ENCODE measurements at regions of chr7 and their contacts with region 1.

Region 1: DNA sequence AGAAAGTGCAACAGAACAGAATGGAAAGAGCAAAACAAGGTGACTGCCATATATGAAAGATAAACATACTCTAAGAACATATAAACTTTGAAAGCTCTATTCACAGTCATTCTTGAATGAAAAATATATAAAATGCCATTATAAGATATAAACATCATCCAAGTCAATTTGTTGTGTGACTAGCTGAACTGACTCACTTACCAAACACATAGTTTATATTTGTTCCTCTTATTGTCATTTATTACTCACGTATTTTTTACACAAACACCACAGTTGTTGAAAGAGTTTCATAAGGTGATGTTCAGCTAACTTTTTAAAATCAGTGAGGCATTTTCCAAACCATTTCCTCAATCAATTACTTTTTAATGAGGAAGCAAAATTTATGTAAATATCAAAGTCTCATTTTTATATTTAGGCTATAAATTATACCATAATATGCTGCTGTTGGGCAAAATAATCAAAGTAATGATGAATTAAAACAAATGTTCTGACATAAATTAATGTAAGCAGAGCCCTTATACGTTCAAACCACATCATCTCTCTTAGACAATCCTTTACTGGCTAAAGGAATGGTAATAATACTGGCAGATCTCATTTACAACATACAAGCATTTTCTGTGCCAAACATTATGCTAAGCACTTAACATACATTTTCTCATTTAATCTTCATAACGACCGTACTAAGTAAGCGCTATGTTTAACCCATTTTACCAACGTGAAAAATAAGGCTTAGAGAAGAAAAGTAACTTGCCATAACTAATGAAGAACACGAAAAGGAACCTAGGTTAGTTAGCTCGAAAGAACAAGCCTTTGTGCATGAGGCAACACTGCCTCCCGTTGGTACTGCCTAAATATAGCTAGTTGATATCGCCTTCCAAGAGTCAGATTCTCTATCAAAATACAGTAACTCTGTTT is 7.3 kb downstream of the LRRN3 start:
- DNase-seq: peak; percentile 47
- H3K4me3 Mint-ChIP-seq: peak overlapping the region; percentile 78
- H3K27ac Mint-ChIP-seq: peak overlapping the region; percentile 62
- H3K4me1 Mint-ChIP-seq: peaks cover 81% of the 10 kb centered on the region
- H3K27me3 Mint-ChIP-seq: no peaks in the 10 kb centered on the region

Region 2: GRCh38 chr7:110010359-110010758 is 1087.9 kb before region 1 on chr7:
- intact Hi-C with region 1: loop called (anchors 2 kb)
- DNase-seq: no peak
- H3K4me3 Mint-ChIP-seq: no peak overlapping the region
- H3K27ac Mint-ChIP-seq: no peak overlapping the region
- H3K4me1 Mint-ChIP-seq: no peaks in the 10 kb centered on the region
- H3K27me3 Mint-ChIP-seq: no peaks in the 10 kb centered on the region

Region 3: DNA sequence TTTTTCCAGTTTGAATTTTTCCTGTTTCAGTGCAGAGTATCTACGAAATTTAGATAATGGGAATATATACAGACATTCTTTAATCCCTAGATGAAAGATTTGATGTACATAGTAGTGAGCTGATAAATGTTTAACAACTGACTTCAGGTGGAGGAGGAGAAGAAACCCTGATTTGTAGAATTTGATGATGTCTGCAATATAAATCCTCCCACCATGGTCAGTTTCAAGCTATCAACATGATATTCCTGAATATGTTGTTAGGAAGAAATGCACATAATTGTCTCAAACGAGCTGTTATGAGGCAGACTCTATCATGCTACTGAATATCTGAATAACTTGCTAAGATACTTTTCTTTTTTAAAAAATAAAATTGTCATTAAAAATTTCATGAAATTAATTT is 636.6 kb before region 1 on chr7:
- intact Hi-C with region 1: loop called (anchors 10 kb)
- DNase-seq: no peak
- H3K4me3 Mint-ChIP-seq: no peak overlapping the region
- H3K27ac Mint-ChIP-seq: no peak overlapping the region
- H3K4me1 Mint-ChIP-seq: no peaks in the 10 kb centered on the region
- H3K27me3 Mint-ChIP-seq: peaks cover 4% of the 10 kb centered on the region

Region 4: GRCh38 chr7:110522761-110523244 is 575.5 kb before region 1 on chr7:
- intact Hi-C with region 1: loop called (anchors 10 kb)
- DNase-seq: no peak
- H3K4me3 Mint-ChIP-seq: no peak overlapping the region
- H3K27ac Mint-ChIP-seq: no peak overlapping the region
- H3K4me1 Mint-ChIP-seq: no peaks in the 10 kb centered on the region
- H3K27me3 Mint-ChIP-seq: no peaks in the 10 kb centered on the region

Region 5: GRCh38 chr7:110590415-110590814 is 507.9 kb before region 1 on chr7:
- intact Hi-C with region 1: loop called (anchors 2 kb)
- DNase-seq: no peak
- H3K4me3 Mint-ChIP-seq: no peak overlapping the region
- H3K27ac Mint-ChIP-seq: no peak overlapping the region
- H3K4me1 Mint-ChIP-seq: no peaks in the 10 kb centered on the region
- H3K27me3 Mint-ChIP-seq: peaks cover 5% of the 10 kb centered on the region

Region 6: DNA sequence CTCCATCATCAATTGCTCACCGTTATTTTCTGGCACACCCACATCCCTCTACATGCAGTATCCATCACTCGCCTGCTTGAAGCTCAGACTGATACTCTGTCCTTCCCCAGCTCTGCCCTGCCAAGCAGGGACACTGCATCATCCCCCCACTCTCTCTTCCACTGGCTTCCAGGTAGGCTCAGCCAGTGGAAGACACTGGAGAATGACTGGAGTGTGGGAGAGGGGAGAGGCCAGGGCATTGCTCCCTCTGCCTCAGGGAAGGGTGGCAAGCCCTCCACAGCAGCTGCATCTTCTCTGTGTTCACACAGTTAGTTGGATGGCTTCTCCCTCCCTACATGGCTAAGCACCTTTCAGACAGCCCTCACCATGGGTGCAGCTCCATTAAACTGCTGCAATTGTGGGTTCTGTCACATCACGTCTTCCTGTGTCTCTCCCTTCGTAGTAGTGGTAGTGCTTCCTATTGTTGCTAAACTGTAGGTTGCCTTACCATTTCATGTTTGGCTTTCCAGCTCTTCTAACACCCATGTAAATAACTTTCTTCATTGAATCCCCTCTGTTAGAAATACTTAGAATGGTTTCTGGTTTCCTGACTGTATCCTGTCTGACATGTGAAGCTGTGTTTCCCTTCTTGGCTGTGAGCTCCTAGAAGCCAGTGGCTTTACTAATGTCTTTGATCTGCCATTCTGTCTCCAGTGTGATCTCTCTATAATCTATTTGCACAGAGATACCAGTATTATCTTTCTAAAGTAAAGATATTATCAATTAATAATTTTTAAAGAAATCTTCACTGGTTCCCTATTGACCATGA is 491.0 kb before region 1 on chr7:
- intact Hi-C with region 1: no loop called
- DNase-seq: no peak
- H3K4me3 Mint-ChIP-seq: no peak overlapping the region
- H3K27ac Mint-ChIP-seq: no peak overlapping the region
- H3K4me1 Mint-ChIP-seq: peaks cover 4% of the 10 kb centered on the region
- H3K27me3 Mint-ChIP-seq: no peaks in the 10 kb centered on the region

Region 7: GRCh38 chr7:110685899-110686298 is 412.4 kb before region 1 on chr7:
- intact Hi-C with region 1: loop called (anchors 10 kb)
- DNase-seq: no peak
- H3K4me3 Mint-ChIP-seq: no peak overlapping the region
- H3K27ac Mint-ChIP-seq: no peak overlapping the region
- H3K4me1 Mint-ChIP-seq: no peaks in the 10 kb centered on the region
- H3K27me3 Mint-ChIP-seq: no peaks in the 10 kb centered on the region

Region 8: DNA sequence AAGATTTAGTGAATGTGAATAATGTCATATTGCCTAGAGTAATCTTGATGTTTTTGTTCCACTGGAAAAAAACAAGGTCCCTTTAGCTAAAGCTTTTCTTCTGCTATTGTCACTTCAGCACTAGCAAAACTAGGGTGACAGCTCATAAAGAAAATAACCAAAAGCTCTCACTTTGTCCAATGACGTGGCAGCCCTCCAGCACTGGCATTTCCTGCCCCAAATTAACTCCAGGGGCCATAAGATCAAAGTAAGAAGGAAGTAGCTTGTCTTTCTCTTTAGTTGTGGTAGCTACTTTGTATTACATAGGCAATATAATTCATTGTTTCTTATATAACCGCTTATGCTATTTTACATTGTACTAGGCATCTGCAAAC is 39.9 kb after region 1 on chr7:
- intact Hi-C with region 1: no loop called
- DNase-seq: peak; percentile 61
- H3K4me3 Mint-ChIP-seq: peak overlapping the region; percentile 53
- H3K27ac Mint-ChIP-seq: peak overlapping the region; percentile 96
- H3K4me1 Mint-ChIP-seq: peaks cover 35% of the 10 kb centered on the region
- H3K27me3 Mint-ChIP-seq: peaks cover 4% of the 10 kb centered on the region